HepG2 (cell line): ENCODE measurements at regions of chr18 and their contacts with region 1.

Region 1: GRCh38 chr18:55234366-55235093 is 275.3 kb upstream of the CCDC68 start:
- DNase-seq: peak; percentile 47
- ATAC-seq: peak; percentile 98
- H3K4me3 ChIP-seq: no peak overlapping the region
- H3K27ac ChIP-seq: no peak overlapping the region
- H3K4me1 ChIP-seq: no peaks in the 10 kb centered on the region
- H3K27me3 ChIP-seq: 0 out of 5 replicates have a peak, but pooled peaks cover 0 to 6% of the 10 kb centered on the region in 2 experiments
- CTCF ChIP-seq: peak; percentile 90
- EP300 ChIP-seq: no peak
- POLR2A ChIP-seq: no peak
- RAD21 ChIP-seq: peak; percentile 71

Region 2: GRCh38 chr18:55189972-55190371 is 44.6 kb before region 1 on chr18:
- CTCF ChIA-PET with region 1: no interaction called
- POLR2A ChIA-PET with region 1: no interaction called
- in situ Hi-C with region 1: no loop called
- intact Hi-C with region 1: no loop called
- DNase-seq: no peak
- ATAC-seq: no peak
- H3K4me3 ChIP-seq: no peak overlapping the region
- H3K27ac ChIP-seq: no peak overlapping the region
- H3K4me1 ChIP-seq: no peaks in the 10 kb centered on the region
- H3K27me3 ChIP-seq: no peaks in the 10 kb centered on the region
- CTCF ChIP-seq: no peak
- EP300 ChIP-seq: no peak
- POLR2A ChIP-seq: no peak
- RAD21 ChIP-seq: no peak

Region 3: GRCh38 chr18:55275039-55275901 is 40.7 kb after region 1 on chr18:
- CTCF ChIA-PET with region 1: interaction called, 5 read pairs
- POLR2A ChIA-PET with region 1: no interaction called
- in situ Hi-C with region 1: no loop called
- intact Hi-C with region 1: loop called (anchors 1 kb)
- DNase-seq: no peak
- ATAC-seq: peak; percentile 54; the same call in 1 of the 3 replicates
- H3K4me3 ChIP-seq: no peak overlapping the region
- H3K27ac ChIP-seq: no peak overlapping the region
- H3K4me1 ChIP-seq: no peaks in the 10 kb centered on the region
- H3K27me3 ChIP-seq: no peaks in the 10 kb centered on the region
- CTCF ChIP-seq: no peak
- EP300 ChIP-seq: no peak
- POLR2A ChIP-seq: no peak
- RAD21 ChIP-seq: no peak

Region 4: DNA sequence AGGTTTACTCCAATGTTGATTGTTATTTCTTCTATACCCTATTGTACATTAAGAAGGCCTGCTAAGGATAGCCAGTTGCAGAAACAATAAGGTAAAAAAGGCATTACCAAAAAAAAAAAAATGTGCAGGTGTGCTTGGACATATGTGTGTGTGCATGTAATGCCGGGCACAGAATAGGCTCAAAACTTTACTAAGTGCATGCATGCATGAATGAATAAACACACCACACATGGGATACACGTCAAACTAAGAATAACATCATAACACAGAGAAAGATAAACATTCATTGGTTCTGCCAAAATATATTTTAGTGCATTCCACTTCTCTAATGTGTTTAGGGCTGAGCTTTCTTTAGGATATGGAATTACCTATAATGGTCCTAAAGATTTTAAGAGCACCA is 55.2 kb after region 1 on chr18:
- CTCF ChIA-PET with region 1: no interaction called
- POLR2A ChIA-PET with region 1: no interaction called
- in situ Hi-C with region 1: no loop called
- intact Hi-C with region 1: no loop called
- DNase-seq: no peak
- ATAC-seq: no peak
- H3K4me3 ChIP-seq: no peak overlapping the region
- H3K27ac ChIP-seq: no peak overlapping the region
- H3K4me1 ChIP-seq: no peaks in the 10 kb centered on the region
- H3K27me3 ChIP-seq: no peaks in the 10 kb centered on the region
- CTCF ChIP-seq: no peak
- EP300 ChIP-seq: no peak
- POLR2A ChIP-seq: no peak
- RAD21 ChIP-seq: no peak

Region 5: GRCh38 chr18:55415258-55415871 is 180.8 kb after region 1 on chr18:
- CTCF ChIA-PET with region 1: no interaction called
- POLR2A ChIA-PET with region 1: no interaction called
- in situ Hi-C with region 1: no loop called
- intact Hi-C with region 1: loop called (anchors 1 kb)
- DNase-seq: peak; percentile 27
- ATAC-seq: peak; percentile 88
- H3K4me3 ChIP-seq: no peak overlapping the region
- H3K27ac ChIP-seq: no peak overlapping the region
- H3K4me1 ChIP-seq: no peaks in the 10 kb centered on the region
- H3K27me3 ChIP-seq: no peaks in the 10 kb centered on the region
- CTCF ChIP-seq: peak; percentile 75
- EP300 ChIP-seq: no peak
- POLR2A ChIP-seq: no peak
- RAD21 ChIP-seq: peak; percentile 41

Region 6: GRCh38 chr18:56575819-56576663 is 1341.5 kb after region 1 on chr18:
- CTCF ChIA-PET with region 1: interaction called, 14 read pairs
- POLR2A ChIA-PET with region 1: no interaction called
- in situ Hi-C with region 1: loop called (anchors 10 kb)
- intact Hi-C with region 1: loop called (anchors 1 kb)
- DNase-seq: peak; percentile 36
- ATAC-seq: peak; percentile 87
- H3K4me3 ChIP-seq: no peak overlapping the region
- H3K27ac ChIP-seq: no peak overlapping the region
- H3K4me1 ChIP-seq: peaks cover 6% of the 10 kb centered on the region
- H3K27me3 ChIP-seq: no peaks in the 10 kb centered on the region
- CTCF ChIP-seq: peak; percentile 65
- EP300 ChIP-seq: no peak
- POLR2A ChIP-seq: no peak
- RAD21 ChIP-seq: peak; percentile 35; the same call in 1 of the 2 replicates